ENCODE measurements at regions of chr4 and their contacts with region 1.

Region 1: DNA sequence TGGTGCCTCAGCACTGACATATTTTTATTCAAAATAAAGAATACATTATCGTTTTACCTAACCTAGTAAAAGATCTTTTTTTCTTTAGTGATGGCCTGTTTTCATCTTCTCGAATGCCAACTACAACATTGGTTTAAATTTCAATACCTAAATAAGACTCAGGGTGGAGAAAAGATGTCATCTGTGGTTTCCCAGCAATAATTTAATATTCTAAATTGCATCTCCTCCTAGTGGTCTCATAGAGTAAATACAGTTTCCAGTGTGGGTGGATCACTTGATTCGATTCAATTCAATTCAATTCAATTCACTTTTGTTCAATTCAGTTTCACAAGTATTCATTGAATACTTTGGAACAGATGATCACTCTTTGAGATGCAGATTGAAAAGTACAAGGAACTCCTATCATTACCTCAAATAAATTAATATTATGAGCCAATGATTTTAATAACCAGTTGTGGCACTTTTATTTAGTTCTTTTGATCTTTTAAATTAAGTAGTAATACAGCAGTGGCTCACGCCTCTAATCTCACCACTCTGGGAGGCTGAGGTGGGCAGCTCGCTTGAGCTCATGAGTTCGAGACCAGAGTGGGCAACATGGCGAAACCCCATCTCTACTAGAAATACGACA is 427.2 kb downstream of the FAT4 start:
- DNase-seq: no peak
- H3K4me3 Mint-ChIP-seq: no peak overlapping the region
- H3K27ac Mint-ChIP-seq: no peak overlapping the region
- H3K4me1 Mint-ChIP-seq: no peaks in the 10 kb centered on the region
- H3K27me3 Mint-ChIP-seq: no peaks in the 10 kb centered on the region
- CTCF ChIP-seq: peak; percentile 42

Region 2: DNA sequence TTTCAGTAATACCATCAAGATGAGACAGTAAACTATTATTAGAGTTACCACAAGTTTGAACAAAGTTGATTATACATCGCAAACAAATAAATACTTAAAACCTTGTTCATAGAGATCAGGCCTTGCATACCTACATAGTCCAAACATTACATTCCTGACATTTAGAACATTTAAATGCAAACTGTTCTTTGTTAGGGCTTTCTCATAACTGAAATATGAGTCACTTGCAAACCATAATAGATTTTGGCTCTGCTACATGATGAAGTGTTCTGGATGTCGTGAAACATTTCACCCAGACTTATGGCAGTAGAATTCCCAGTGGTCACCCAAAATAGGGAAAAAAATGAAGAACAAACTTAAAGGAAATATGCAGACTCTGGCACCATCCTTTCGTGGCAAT is 352.2 kb before region 1 on chr4:
- CTCF ChIA-PET with region 1: no interaction called
- intact Hi-C with region 1: loop called (anchors 5 kb)
- DNase-seq: no peak
- H3K4me3 Mint-ChIP-seq: no peak overlapping the region
- H3K27ac Mint-ChIP-seq: peak overlapping the region; percentile 52
- H3K4me1 Mint-ChIP-seq: peaks cover 14% of the 10 kb centered on the region
- H3K27me3 Mint-ChIP-seq: no peaks in the 10 kb centered on the region
- CTCF ChIP-seq: no peak

Measured in Calu3 (cell line).